ENCODE measurements at regions of chr19 and their contacts with region 1.

Region 1: DNA sequence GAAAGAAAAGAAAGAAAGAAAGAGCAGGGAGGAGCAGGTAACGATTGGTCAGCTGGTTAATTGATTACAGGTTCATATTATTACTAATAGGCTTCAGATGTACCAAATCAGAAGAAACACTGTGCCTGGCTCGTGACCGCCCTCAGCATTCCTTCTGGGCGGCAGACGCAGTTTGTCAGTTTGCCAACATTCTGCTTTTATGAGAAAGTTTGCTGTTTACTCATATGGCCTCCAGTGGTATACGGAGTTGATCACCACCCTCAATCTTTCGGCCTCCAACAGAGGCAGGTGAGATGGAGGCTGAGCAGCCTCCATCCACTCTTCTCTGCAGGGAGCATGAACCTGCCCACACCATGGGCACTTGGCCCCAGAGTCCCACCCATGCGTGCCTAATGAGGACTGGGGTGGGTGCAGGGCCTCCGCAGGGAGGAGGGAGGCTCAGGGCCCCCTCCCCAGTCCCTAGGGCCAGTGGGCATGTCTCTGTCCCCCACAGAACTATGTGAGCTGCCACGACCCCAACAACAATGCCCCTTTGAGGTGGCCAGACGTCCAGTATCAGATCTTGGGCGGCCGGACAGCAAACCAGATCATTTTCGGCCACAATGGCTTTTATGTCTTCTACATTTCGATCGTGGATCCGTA is 8.8 kb downstream of the PRR22 start:
- DNase-seq: peak; percentile 30
- H3K4me3 ChIP-seq: no peak overlapping the region
- H3K27ac ChIP-seq: no peak overlapping the region
- H3K4me1 ChIP-seq: no peaks in the 10 kb centered on the region
- H3K27me3 ChIP-seq: no peaks in the 10 kb centered on the region
- CTCF ChIP-seq: no peak

Region 2: GRCh38 chr19:5667751-5668271 is 108.0 kb before region 1 on chr19:
- CTCF ChIA-PET with region 1: no interaction called
- dilution Hi-C with region 1: no loop called
- in situ Hi-C with region 1: no loop called
- intact Hi-C with region 1: no loop called
- DNase-seq: no peak
- H3K4me3 ChIP-seq: no peak overlapping the region
- H3K27ac ChIP-seq: no peak overlapping the region
- H3K4me1 ChIP-seq: no peaks in the 10 kb centered on the region
- H3K27me3 ChIP-seq: no peaks in the 10 kb centered on the region
- CTCF ChIP-seq: no peak

Region 3: GRCh38 chr19:5719961-5720790 is 55.6 kb before region 1 on chr19 and contains the starts of genes CATSPERD and LONP1:
- CTCF ChIA-PET with region 1: no interaction called
- dilution Hi-C with region 1: no loop called
- in situ Hi-C with region 1: loop called in 1 of 2 experiments (anchors 10 kb)
- intact Hi-C with region 1: no loop called
- DNase-seq: peak; percentile 98
- H3K4me3 ChIP-seq: peak within 1 kb of the TSS; percentile 46 to 94 (median 66)
- H3K27ac ChIP-seq: peak within 1 kb of the TSS; percentile 91
- H3K4me1 ChIP-seq: peaks cover 14% of the 10 kb centered on the region
- H3K27me3 ChIP-seq: no peaks in the 10 kb centered on the region
- CTCF ChIP-seq: peak; percentile 81 to 93
- total RNA-seq, gene CATSPERD: not detected
- total RNA-seq, gene LONP1: 73.7 to 88.3 TPM

Region 4: DNA sequence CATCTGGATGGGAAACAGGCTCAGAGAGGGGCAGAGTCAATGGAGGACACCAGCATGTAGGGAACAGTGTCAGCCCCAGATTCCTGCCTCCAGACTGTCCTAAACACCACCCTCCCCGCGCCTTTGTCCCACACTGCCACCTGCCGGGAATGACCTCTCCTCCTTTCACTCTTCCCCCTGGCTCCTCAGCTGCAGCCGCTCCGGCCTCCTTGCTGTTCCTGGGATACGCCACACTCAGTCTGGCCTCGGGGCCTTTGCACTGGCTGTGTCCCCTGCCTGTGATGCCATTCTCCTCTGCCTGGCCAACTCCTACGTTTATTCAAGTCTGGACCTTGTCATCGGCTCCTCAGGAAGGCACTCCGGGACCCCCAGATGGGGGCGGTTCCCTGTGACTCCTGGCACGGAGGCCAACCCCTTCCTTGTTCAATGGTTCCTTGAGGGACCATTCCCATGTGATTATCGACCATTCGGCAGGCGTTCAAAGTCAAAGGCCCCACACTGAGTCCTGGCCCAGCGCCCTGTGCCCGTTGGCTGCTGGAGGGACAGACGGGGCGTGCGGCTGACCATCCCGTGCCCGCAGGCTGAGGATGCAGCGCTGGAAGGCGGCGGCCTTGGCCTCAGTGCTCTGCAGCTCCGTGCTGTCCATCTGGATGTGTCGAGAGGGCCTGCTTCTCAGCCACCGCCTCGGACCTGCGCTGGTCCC is 47.9 kb after region 1 on chr19:
- CTCF ChIA-PET with region 1: no interaction called
- dilution Hi-C with region 1: no loop called
- in situ Hi-C with region 1: no loop called
- intact Hi-C with region 1: loop called (anchors 1 kb)
- DNase-seq: no peak
- H3K4me3 ChIP-seq: no peak overlapping the region
- H3K27ac ChIP-seq: no peak overlapping the region
- H3K4me1 ChIP-seq: no peaks in the 10 kb centered on the region
- H3K27me3 ChIP-seq: no peaks in the 10 kb centered on the region
- CTCF ChIP-seq: peak in 1 of 2 donors; percentile 37

Region 5: GRCh38 chr19:5891938-5892771 is 116.4 kb after region 1 on chr19:
- CTCF ChIA-PET with region 1: no interaction called
- dilution Hi-C with region 1: no loop called
- in situ Hi-C with region 1: no loop called
- intact Hi-C with region 1: loop called (anchors 1 kb)
- DNase-seq: no peak
- H3K4me3 ChIP-seq: no peak overlapping the region
- H3K27ac ChIP-seq: no peak overlapping the region
- H3K4me1 ChIP-seq: peaks cover 10% of the 10 kb centered on the region
- H3K27me3 ChIP-seq: no peaks in the 10 kb centered on the region
- CTCF ChIP-seq: peak; percentile 50 to 76

Region 6: DNA sequence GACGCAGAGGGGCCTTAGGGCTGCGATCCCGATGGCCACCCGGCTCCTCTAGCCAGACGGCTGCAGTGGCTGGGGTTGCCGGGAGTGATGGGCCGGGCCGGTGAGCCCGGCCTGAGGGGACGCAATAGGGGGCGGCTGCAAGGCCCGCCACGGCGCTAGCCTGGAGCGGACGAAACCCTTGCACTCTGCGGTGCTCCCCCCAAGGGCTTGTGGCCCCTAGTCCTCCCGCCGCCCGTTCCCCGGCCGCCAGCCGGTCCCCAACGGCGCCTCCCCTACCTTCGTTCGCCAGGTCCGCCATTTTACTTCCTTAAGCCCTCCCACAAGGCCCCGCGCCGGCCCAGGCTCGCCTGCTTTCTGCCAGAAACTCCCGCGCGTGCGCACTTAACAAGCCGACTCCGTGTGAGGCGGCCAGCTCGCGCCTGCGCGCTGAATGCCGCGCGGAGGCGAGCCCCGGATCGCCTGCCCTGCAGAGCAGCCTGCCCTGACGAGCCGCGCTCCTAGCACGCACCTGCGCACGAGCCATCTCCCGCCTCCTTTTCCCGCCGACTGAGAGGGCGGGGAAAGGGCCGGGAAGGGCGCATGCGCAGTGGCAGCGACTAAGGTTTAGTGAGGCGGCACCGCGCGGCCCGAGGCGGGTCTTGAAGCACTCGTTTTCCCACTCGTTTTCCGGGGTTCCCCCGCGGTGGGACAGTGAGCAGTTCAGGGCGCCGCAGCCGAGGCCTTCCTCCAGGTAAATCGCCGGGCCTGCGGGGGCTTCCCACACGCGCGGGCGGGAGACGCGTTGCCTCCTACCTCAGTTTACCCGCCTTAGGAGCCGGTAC is 202.2 kb after region 1 on chr19 and contains the start of gene RANBP3:
- CTCF ChIA-PET with region 1: no interaction called
- dilution Hi-C with region 1: no loop called
- in situ Hi-C with region 1: loop called in 1 of 2 experiments (anchors 10 kb)
- intact Hi-C with region 1: no loop called
- DNase-seq: peak; percentile 99
- H3K4me3 ChIP-seq: peak within 1 kb of the TSS; percentile 67 to 96 (median 81)
- H3K27ac ChIP-seq: peak within 1 kb of the TSS; percentile 58
- H3K4me1 ChIP-seq: peaks cover 21% of the 10 kb centered on the region
- H3K27me3 ChIP-seq: no peaks in the 10 kb centered on the region
- CTCF ChIP-seq: no peak
- total RNA-seq, gene RANBP3: 41.0 to 73.9 TPM

Measured in mammary epithelial cell (primary cell).